Activated CD8-positive, alpha-beta T cell treated with anti-CD3 and anti-CD28 coated beads for 36 hours (primary cell): ENCODE measurements at regions of chr1 and their contacts with region 1.

Region 1: GRCh38 chr1:47997289-47998200 is at the start of gene TRABD2B:
- DNase-seq: peak; percentile 63
- ATAC-seq: peak; percentile 93
- H3K4me3 Mint-ChIP-seq: peak within 1 kb of the TSS; percentile 54
- H3K27ac Mint-ChIP-seq: no peak within 1 kb of the TSS
- H3K4me1 Mint-ChIP-seq: peaks cover 2% of the 10 kb centered on the region
- H3K27me3 Mint-ChIP-seq: peaks cover 43% of the 10 kb centered on the region
- CTCF ChIP-seq: peak; percentile 88
- total RNA-seq, gene TRABD2B: not detected

Region 2: GRCh38 chr1:47986761-47987200 is 10.8 kb before region 1 on chr1:
- CTCF ChIA-PET with region 1: interaction called, 13 read pairs
- POLR2A ChIA-PET with region 1: interaction called, 3 read pairs
- intact Hi-C with region 1: no loop called
- DNase-seq: no peak
- ATAC-seq: no peak
- H3K4me3 Mint-ChIP-seq: no peak overlapping the region
- H3K27ac Mint-ChIP-seq: no peak overlapping the region
- H3K4me1 Mint-ChIP-seq: peaks cover 3% of the 10 kb centered on the region
- H3K27me3 Mint-ChIP-seq: peaks cover 46% of the 10 kb centered on the region
- CTCF ChIP-seq: no peak

Region 3: GRCh38 chr1:48033495-48034045 is 36.0 kb after region 1 on chr1:
- CTCF ChIA-PET with region 1: interaction called, 10 read pairs
- POLR2A ChIA-PET with region 1: no interaction called
- intact Hi-C with region 1: no loop called
- DNase-seq: no peak
- ATAC-seq: no peak
- H3K4me3 Mint-ChIP-seq: no peak overlapping the region
- H3K27ac Mint-ChIP-seq: no peak overlapping the region
- H3K4me1 Mint-ChIP-seq: no peaks in the 10 kb centered on the region
- H3K27me3 Mint-ChIP-seq: peaks cover 5% of the 10 kb centered on the region
- CTCF ChIP-seq: no peak

Region 4: GRCh38 chr1:48061162-48062136 is 63.9 kb after region 1 on chr1:
- CTCF ChIA-PET with region 1: interaction called, 19 read pairs
- POLR2A ChIA-PET with region 1: no interaction called
- intact Hi-C with region 1: loop called (anchors 5 kb)
- DNase-seq: peak; percentile 56
- ATAC-seq: peak; percentile 64
- H3K4me3 Mint-ChIP-seq: no peak overlapping the region
- H3K27ac Mint-ChIP-seq: no peak overlapping the region
- H3K4me1 Mint-ChIP-seq: no peaks in the 10 kb centered on the region
- H3K27me3 Mint-ChIP-seq: no peaks in the 10 kb centered on the region
- CTCF ChIP-seq: peak; percentile 57

Region 5: GRCh38 chr1:48114596-48115382 is 117.2 kb after region 1 on chr1:
- CTCF ChIA-PET with region 1: no interaction called
- POLR2A ChIA-PET with region 1: no interaction called
- intact Hi-C with region 1: no loop called
- DNase-seq: no peak
- ATAC-seq: no peak
- H3K4me3 Mint-ChIP-seq: no peak overlapping the region
- H3K27ac Mint-ChIP-seq: no peak overlapping the region
- H3K4me1 Mint-ChIP-seq: no peaks in the 10 kb centered on the region
- H3K27me3 Mint-ChIP-seq: peaks cover 6% of the 10 kb centered on the region
- CTCF ChIP-seq: no peak

Region 6: GRCh38 chr1:48190881-48191280 is 193.3 kb after region 1 on chr1:
- CTCF ChIA-PET with region 1: no interaction called
- POLR2A ChIA-PET with region 1: no interaction called
- intact Hi-C with region 1: no loop called
- DNase-seq: no peak
- ATAC-seq: no peak
- H3K4me3 Mint-ChIP-seq: no peak overlapping the region
- H3K27ac Mint-ChIP-seq: no peak overlapping the region
- H3K4me1 Mint-ChIP-seq: no peaks in the 10 kb centered on the region
- H3K27me3 Mint-ChIP-seq: peaks cover 12% of the 10 kb centered on the region
- CTCF ChIP-seq: no peak

Region 7: DNA sequence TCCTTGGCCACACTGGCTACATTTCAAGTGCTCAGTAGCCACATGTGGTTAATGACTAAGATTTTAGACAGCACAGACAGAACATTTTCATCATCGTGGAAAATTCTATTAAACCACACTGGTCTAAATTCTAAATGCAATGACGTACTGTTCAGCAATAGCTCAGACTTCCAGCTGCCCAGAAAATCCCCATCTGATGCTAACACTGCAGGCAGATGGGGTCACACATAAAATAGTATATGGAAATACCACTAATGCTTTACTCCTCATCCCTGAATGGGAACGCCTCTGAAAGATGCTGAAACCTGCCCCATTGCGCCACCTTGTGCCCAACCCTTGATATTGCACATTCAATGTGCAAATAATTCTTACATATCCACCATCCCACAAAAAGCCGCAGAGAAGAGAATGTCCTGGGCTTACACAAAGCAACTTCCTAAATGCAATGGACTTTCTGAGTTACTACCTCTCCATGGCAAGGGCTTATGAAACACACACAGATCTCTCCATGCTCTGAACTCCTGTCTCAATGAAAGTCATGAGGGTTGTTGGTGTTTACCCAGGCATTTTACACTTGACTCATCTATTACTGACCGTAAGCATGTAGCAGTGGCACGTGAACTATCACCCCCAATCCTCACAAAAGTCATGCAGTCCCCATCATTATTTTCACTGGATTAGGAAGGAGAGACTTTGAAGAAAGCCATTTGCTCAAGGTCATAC is 204.6 kb after region 1 on chr1:
- CTCF ChIA-PET with region 1: interaction called, 3 read pairs
- POLR2A ChIA-PET with region 1: no interaction called
- intact Hi-C with region 1: loop called (anchors 10 kb)
- DNase-seq: peak; percentile 66
- ATAC-seq: peak; percentile 80
- H3K4me3 Mint-ChIP-seq: no peak overlapping the region
- H3K27ac Mint-ChIP-seq: no peak overlapping the region
- H3K4me1 Mint-ChIP-seq: peaks cover 6% of the 10 kb centered on the region
- H3K27me3 Mint-ChIP-seq: peaks cover 6% of the 10 kb centered on the region
- CTCF ChIP-seq: peak; percentile 89

Region 8: GRCh38 chr1:48236716-48237470 is 239.3 kb after region 1 on chr1:
- CTCF ChIA-PET with region 1: interaction called, 3 read pairs
- POLR2A ChIA-PET with region 1: no interaction called
- intact Hi-C with region 1: loop called (anchors 10 kb)
- DNase-seq: no peak
- ATAC-seq: no peak
- H3K4me3 Mint-ChIP-seq: no peak overlapping the region
- H3K27ac Mint-ChIP-seq: no peak overlapping the region
- H3K4me1 Mint-ChIP-seq: no peaks in the 10 kb centered on the region
- H3K27me3 Mint-ChIP-seq: no peaks in the 10 kb centered on the region
- CTCF ChIP-seq: peak; percentile 66